ENCODE measurements at regions of chr12 and their contacts with region 1.

Region 1: DNA sequence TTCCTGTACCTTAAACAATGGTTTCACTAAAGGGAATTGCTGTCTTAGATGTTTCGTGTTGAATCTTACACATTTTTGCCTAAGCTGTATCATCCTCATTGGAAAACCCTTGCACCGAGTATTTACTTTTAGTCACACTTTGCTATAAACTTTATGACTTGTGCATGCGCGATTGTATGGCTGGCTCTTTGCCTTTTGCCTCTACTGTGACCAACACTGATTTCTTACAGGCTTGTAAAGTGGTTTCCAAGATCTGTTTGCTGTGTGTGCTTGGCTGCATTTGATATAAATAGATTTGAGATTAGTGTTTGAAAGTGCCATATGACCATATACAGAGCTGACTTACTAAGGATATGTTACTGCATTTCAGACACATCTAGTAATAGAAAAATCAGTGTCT is 40.5 kb downstream of the RASSF3 start:
- DNase-seq: no peak
- ATAC-seq: no peak
- H3K4me3 Mint-ChIP-seq: no peak overlapping the region
- H3K27ac Mint-ChIP-seq: no peak overlapping the region
- H3K4me1 Mint-ChIP-seq: peaks cover 71% of the 10 kb centered on the region
- H3K27me3 Mint-ChIP-seq: no peaks in the 10 kb centered on the region
- CTCF ChIP-seq: no peak

Region 2: DNA sequence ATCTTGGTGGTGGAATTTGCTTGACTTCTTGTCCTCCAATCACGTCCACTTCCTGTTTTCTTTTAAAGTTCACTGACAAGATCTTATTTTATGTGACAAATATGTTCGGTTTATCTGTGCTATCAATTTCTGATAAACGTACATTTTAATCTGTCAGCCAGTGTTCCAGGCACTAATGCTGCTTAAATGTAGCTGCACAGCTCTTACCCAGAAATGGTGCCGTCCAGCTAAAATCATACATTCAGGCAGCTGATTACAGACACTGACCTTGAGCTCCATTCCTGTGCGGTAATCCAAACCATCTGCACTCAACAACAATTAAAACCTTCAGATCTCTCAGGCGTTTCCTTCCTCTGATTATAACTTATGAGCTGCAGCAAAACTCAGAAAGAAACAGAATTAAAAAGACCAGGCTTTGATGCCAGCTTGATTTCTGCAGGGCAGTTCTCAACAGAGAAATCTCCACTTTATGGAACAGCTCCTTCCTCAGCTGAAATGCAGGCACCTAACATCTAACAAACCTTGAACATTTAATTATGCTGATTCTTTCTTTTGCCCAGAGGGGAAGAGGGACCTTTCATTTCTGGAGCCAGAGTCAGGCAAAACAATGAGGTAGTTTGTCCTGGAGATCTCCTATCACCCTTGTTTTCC is 66.9 kb before region 1 on chr12:
- CTCF ChIA-PET with region 1: no interaction called
- POLR2A ChIA-PET with region 1: no interaction called
- intact Hi-C with region 1: loop called (anchors 2 kb)
- DNase-seq: no peak
- ATAC-seq: no peak
- H3K4me3 Mint-ChIP-seq: peak overlapping the region; percentile 62
- H3K27ac Mint-ChIP-seq: no peak overlapping the region
- H3K4me1 Mint-ChIP-seq: peaks cover 13% of the 10 kb centered on the region
- H3K27me3 Mint-ChIP-seq: no peaks in the 10 kb centered on the region
- CTCF ChIP-seq: no peak

Region 3: DNA sequence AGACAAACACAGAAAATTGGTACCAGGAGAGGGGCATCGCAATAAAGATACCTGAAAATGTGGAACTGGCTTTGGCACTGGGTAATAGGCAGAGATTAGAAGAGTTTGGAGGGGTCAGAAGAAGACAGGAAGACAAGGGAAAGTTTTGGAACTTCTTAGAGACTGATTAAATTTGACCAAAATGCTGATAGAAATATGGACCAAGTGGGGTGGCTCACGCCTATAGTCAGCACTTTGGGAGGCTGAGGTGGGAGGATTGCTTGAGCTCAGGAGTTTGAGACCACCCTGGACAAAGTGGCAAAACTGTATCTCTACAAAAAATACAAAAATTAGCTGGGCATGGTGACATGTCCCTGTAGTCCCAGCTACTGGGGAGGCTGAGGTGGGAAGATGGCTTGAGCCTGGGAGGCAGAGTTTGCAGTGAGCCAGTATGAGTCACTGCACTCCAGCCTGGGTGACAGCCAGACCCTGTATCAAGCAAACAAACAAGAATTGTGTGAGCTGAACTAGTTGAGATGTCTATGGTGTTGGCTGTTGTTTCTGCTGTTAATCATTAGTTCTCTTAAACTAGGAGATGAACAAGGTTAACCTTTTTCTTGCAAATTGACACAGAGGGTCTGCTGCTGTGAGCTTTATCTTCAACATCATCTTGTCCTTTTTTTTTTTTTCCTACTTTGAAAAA is 17.0 kb before region 1 on chr12:
- CTCF ChIA-PET with region 1: no interaction called
- POLR2A ChIA-PET with region 1: interaction called, 6 read pairs
- intact Hi-C with region 1: loop called (anchors 2 kb)
- DNase-seq: no peak
- ATAC-seq: no peak
- H3K4me3 Mint-ChIP-seq: no peak overlapping the region
- H3K27ac Mint-ChIP-seq: peak overlapping the region; percentile 42
- H3K4me1 Mint-ChIP-seq: peaks cover 79% of the 10 kb centered on the region
- H3K27me3 Mint-ChIP-seq: no peaks in the 10 kb centered on the region
- CTCF ChIP-seq: no peak

Measured in activated B cell treated with CpG ODN at 0.5 μM for 24 hours (primary cell).